Kidney (tissue), 22 donors: ENCODE measurements at regions of chr1 and their contacts with region 1.

Region 1: GRCh38 chr1:27090911-27091310 is 64.0 kb downstream of the SLC9A1 start:
- DNase-seq: no peak
- H3K4me3 ChIP-seq: no peak overlapping the region
- H3K27ac ChIP-seq: no peak overlapping the region
- H3K4me1 ChIP-seq: no peaks in the 10 kb centered on the region
- H3K27me3 ChIP-seq: no peaks in the 10 kb centered on the region
- CTCF ChIP-seq: no peak

Region 2: DNA sequence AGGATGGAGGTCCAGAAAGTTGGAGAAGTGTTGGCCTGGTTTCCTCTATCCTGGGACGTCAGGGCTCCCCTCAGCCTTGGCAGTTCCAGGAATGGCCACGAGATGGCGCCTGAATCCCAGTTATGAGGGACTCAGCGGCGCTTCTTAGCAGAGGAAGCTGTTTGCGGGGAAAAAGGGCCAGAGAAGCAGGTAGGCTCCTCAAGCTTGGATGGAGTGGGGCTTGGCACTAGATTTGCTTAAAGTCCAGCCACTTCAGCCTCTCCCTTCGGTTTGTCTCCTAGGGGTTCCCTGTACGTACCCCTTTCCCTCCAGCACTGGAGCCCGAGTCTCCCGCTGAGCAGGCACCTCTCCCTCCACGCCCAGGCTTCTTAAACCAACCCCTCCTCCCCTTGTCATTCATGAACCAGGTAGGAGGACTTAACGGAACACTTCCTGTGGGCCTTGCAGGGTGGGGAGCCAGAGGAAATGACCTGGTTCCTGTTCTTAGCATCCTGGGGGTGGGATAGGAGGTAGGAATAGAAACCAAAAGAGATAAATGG is 46.2 kb before region 1 on chr1:
- intact Hi-C with region 1: loop called (anchors 5 kb)
- DNase-seq: peak; percentile 87 to 93 (median 91)
- H3K4me3 ChIP-seq: peak overlapping the region in 1 of 3 donors; percentile 15
- H3K27ac ChIP-seq: no peak overlapping the region
- H3K4me1 ChIP-seq: peaks cover 0 to 5% (median 0%) of the 10 kb centered on the region in 3 donors
- H3K27me3 ChIP-seq: no peaks in the 10 kb centered on the region
- CTCF ChIP-seq: peak; percentile 99